ENCODE measurements at regions of chr5 and their contacts with region 1.

Region 1: GRCh38 chr5:115069087-115069968 is 100.4 kb downstream of the TRIM36 start:
- DNase-seq: peak; percentile 49
- H3K4me3 Mint-ChIP-seq: no peak overlapping the region
- H3K27ac Mint-ChIP-seq: peak overlapping the region; percentile 33
- H3K4me1 Mint-ChIP-seq: peaks cover 10% of the 10 kb centered on the region
- H3K27me3 Mint-ChIP-seq: peaks cover 14% of the 10 kb centered on the region

Region 2: GRCh38 chr5:114101153-114101552 is 968.2 kb before region 1 on chr5:
- CTCF ChIA-PET with region 1: no interaction called
- intact Hi-C with region 1: loop called (anchors 5 kb)
- DNase-seq: peak; percentile 5
- H3K4me3 Mint-ChIP-seq: no peak overlapping the region
- H3K27ac Mint-ChIP-seq: no peak overlapping the region
- H3K4me1 Mint-ChIP-seq: no peaks in the 10 kb centered on the region
- H3K27me3 Mint-ChIP-seq: no peaks in the 10 kb centered on the region

Region 3: DNA sequence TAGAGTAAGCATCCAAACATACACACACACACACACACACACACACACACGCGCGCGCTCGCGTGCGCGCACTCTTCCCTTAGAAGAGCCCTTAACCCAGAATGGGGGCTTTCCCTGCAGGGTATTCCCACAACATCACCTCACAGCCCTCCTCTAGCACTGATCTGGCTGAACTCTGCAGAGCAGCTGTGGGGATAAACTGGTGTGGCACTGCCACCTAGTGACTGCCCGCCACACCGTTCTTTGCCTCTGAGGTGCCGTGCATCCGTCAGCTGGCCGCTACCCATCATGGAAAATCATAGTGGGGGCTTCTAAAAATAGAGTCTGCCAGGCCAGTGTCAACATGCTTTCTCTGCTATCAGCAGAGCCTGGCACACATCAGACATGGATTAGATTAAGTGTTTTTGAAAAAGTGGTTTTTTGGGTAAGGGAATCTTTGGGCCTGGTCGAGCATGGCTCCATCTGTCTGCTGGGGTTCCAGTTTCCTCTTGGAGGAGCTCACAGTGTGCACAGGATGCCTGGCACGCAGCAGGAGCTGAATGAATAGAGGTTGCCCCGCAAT is 619.4 kb before region 1 on chr5:
- CTCF ChIA-PET with region 1: interaction called, 3 read pairs
- intact Hi-C with region 1: loop called (anchors 1 kb)
- DNase-seq: peak; percentile 68
- H3K4me3 Mint-ChIP-seq: no peak overlapping the region
- H3K27ac Mint-ChIP-seq: no peak overlapping the region
- H3K4me1 Mint-ChIP-seq: peaks cover 4% of the 10 kb centered on the region
- H3K27me3 Mint-ChIP-seq: peaks cover 3% of the 10 kb centered on the region

Region 4: GRCh38 chr5:115087951-115088350 is 18.6 kb after region 1 on chr5:
- CTCF ChIA-PET with region 1: no interaction called
- intact Hi-C with region 1: no loop called
- DNase-seq: no peak
- H3K4me3 Mint-ChIP-seq: no peak overlapping the region
- H3K27ac Mint-ChIP-seq: no peak overlapping the region
- H3K4me1 Mint-ChIP-seq: no peaks in the 10 kb centered on the region
- H3K27me3 Mint-ChIP-seq: peaks cover 11% of the 10 kb centered on the region